Activated CD4-positive, alpha-beta memory T cell treated with anti-CD3 and anti-CD28 coated beads for 36 hours (primary cell): ENCODE measurements at regions of chr16 and their contacts with region 1.

Region 1: GRCh38 chr16:78962457-78962929 is 638.0 kb downstream of the MAF start:
- DNase-seq: peak; percentile 52
- H3K4me3 Mint-ChIP-seq: peak overlapping the region; percentile 3
- H3K27ac Mint-ChIP-seq: peak overlapping the region; percentile 92
- H3K4me1 Mint-ChIP-seq: peaks cover 59% of the 10 kb centered on the region
- H3K27me3 Mint-ChIP-seq: no peaks in the 10 kb centered on the region

Region 2: DNA sequence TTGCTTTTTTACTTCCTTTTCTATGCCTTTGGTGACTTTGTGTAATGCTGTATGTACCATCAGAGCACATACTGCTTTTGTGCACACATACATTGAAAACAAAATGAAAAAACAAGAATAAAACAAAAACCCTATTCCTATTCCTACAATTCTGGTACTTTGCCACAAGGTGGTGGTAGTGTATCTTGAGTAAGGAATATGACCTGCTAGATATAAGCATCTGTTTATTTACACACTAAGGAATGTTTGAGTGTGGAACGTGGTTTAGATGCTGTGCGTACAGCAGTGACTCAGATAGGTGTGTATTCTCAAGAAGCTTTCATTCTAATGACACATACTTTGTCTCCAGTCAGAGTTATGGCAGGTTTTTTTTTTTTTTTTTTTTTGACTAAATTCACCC is 256.8 kb before region 1 on chr16:
- CTCF ChIA-PET with region 1: no interaction called
- POLR2A ChIA-PET with region 1: no interaction called
- intact Hi-C with region 1: loop called (anchors 1 kb)
- DNase-seq: peak; percentile 51
- H3K4me3 Mint-ChIP-seq: no peak overlapping the region
- H3K27ac Mint-ChIP-seq: peak overlapping the region; percentile 87
- H3K4me1 Mint-ChIP-seq: peaks cover 16% of the 10 kb centered on the region
- H3K27me3 Mint-ChIP-seq: no peaks in the 10 kb centered on the region

Region 3: DNA sequence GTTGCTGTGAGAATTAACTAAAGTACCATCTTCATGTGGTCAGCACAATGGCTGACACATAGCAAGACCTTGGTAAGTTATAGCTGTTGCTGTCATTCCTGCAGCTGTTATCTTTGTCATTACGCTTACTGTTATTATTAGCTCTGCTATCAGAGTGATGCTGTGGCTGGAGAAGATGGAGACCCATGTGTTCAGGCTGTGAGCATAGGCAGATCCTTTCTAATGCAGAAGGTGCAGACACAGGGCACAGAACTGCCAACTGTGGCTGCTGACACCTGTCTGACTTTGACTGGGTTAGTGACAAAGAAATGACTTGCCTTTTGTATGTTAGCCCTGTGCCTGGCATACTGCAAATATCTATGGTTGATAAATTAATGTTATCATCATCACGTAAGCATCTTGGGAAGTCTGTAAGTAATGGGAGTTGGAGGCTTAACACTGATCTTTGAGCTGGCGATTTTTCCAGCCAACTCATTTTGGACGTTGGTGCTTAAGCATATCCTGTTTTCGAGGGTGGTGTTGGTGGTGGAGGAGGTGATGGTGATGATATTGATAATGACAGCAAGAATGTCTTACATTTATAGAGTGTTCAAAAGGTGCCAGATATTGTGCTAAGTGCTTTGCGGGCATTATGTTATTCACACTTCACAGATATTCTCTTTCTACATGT is 167.8 kb before region 1 on chr16:
- CTCF ChIA-PET with region 1: no interaction called
- POLR2A ChIA-PET with region 1: interaction called, 3 read pairs
- intact Hi-C with region 1: loop called (anchors 5 kb)
- DNase-seq: peak; percentile 58
- H3K4me3 Mint-ChIP-seq: no peak overlapping the region
- H3K27ac Mint-ChIP-seq: peak overlapping the region; percentile 87
- H3K4me1 Mint-ChIP-seq: peaks cover 55% of the 10 kb centered on the region
- H3K27me3 Mint-ChIP-seq: no peaks in the 10 kb centered on the region

Region 4: GRCh38 chr16:78900044-78900811 is 62.3 kb before region 1 on chr16:
- CTCF ChIA-PET with region 1: interaction called, 3 read pairs
- POLR2A ChIA-PET with region 1: interaction called, 8 read pairs
- intact Hi-C with region 1: loop called (anchors 1 kb)
- DNase-seq: no peak
- H3K4me3 Mint-ChIP-seq: peak overlapping the region; percentile 20
- H3K27ac Mint-ChIP-seq: peak overlapping the region; percentile 96
- H3K4me1 Mint-ChIP-seq: peaks cover 76% of the 10 kb centered on the region
- H3K27me3 Mint-ChIP-seq: no peaks in the 10 kb centered on the region

Region 5: GRCh38 chr16:78920621-78921020 is 41.9 kb before region 1 on chr16:
- CTCF ChIA-PET with region 1: interaction called, 3 read pairs
- POLR2A ChIA-PET with region 1: interaction called, 10 read pairs
- intact Hi-C with region 1: loop called (anchors 2 kb)
- DNase-seq: no peak
- H3K4me3 Mint-ChIP-seq: no peak overlapping the region
- H3K27ac Mint-ChIP-seq: peak overlapping the region; percentile 75
- H3K4me1 Mint-ChIP-seq: peaks cover 49% of the 10 kb centered on the region
- H3K27me3 Mint-ChIP-seq: peaks cover 2% of the 10 kb centered on the region

Region 6: GRCh38 chr16:78976212-78976611 is 13.7 kb after region 1 on chr16:
- CTCF ChIA-PET with region 1: no interaction called
- POLR2A ChIA-PET with region 1: interaction called, 13 read pairs
- intact Hi-C with region 1: loop called (anchors 1 kb)
- DNase-seq: peak; percentile 85
- H3K4me3 Mint-ChIP-seq: no peak overlapping the region
- H3K27ac Mint-ChIP-seq: peak overlapping the region; percentile 84
- H3K4me1 Mint-ChIP-seq: peaks cover 32% of the 10 kb centered on the region
- H3K27me3 Mint-ChIP-seq: no peaks in the 10 kb centered on the region

Region 7: GRCh38 chr16:79008036-79008868 is 45.8 kb after region 1 on chr16:
- CTCF ChIA-PET with region 1: no interaction called
- POLR2A ChIA-PET with region 1: interaction called, 12 read pairs
- intact Hi-C with region 1: loop called (anchors 1 kb)
- DNase-seq: peak; percentile 60
- H3K4me3 Mint-ChIP-seq: no peak overlapping the region
- H3K27ac Mint-ChIP-seq: peak overlapping the region; percentile 90
- H3K4me1 Mint-ChIP-seq: peaks cover 45% of the 10 kb centered on the region
- H3K27me3 Mint-ChIP-seq: no peaks in the 10 kb centered on the region